ENCODE measurements at regions of chr17 and their contacts with region 1.

Region 1: DNA sequence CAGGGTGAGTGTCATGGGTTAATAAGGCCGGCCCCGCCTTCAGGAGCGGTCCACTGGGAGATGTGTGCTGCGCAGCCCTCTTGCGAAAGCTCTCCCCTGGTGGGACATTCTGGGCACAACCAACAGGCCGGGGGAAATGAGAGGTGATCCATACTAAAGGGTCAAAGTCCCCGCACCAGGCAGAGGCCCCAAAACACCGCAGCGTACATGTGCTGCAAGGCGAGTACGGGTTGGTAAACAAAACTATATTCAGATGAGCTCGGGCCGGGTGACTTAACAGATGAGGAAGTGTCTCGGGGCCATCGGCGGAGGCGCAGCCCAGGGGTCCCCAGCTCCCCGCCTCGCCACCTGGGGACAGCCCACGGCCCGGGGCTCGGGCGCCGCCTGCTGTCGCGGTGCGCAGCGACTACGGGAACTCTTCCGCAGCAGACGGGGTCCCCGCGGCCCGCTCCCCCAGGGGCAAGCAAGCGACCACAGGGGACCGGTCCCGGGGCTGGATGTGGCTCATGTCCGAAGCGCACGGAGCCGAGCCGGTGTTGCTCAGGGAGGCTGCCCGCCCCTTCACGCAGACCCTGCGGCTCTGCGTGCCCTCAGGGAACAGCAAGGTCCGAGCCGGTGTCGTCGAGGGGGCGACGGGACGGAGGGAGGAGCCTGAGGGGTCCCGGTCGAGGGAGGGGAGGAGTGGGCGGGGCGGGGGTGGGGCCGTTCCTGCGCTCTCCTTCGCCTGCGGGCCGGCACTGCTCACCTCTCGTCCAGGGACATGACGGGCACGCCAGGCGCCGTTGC is at the start of gene RAB37:
- DNase-seq: no peak
- ATAC-seq: peak; percentile 67
- H3K4me3 ChIP-seq: peak within 1 kb of the TSS; percentile 69
- H3K27ac ChIP-seq: peak within 1 kb of the TSS; percentile 47
- H3K4me1 ChIP-seq: peaks cover 32% of the 10 kb centered on the region
- H3K27me3 ChIP-seq: no peaks in the 10 kb centered on the region
- CTCF ChIP-seq: peak; percentile 64 to 76 (median 67); a peak in 5 of 6 replicates
- EP300 ChIP-seq: no peak
- POLR2A ChIP-seq: peak; percentile 31; the same call in 1 of the 2 replicates
- RAD21 ChIP-seq: peak; percentile 76
- polyA plus RNA-seq, gene RAB37: 0.48 to 0.97 TPM

Region 2: DNA sequence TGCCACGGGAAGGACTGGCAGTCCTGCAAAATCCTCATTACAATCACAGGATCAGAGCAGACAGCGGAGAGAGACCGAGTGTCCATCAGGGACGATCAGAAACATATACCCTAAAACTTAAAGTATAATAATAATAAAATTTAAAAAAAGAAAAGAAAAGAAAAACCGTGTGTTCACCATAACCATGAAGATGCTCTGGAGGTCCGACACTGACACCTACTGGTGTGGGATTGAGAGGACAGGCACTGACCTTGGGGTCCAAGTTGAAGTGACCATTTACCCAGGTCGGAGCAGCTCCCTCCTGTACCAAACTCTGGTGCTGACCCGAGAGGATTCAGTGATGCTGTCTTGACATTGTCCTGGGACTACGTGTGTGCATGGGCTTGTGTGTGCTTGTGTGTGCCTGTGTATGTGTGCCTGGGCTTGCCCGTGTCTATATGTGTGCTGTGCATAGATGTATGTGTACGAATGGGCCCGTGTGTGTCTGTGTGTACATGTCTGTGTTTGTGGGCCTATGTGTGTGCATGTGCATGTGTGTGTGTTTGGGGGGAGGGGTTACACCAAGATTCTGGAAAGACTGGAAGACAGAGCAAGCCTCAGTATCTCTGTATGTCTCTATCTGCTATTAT is 134.6 kb before region 1 on chr17:
- CTCF ChIA-PET with region 1: interaction called, 12 read pairs
- POLR2A ChIA-PET with region 1: no interaction called
- RAD21 ChIA-PET with region 1: interaction called, 6 read pairs
- SMC1A ChIA-PET with region 1: no interaction called
- in situ Hi-C with region 1: no loop called
- intact Hi-C with region 1: no loop called
- DNase-seq: no peak
- ATAC-seq: peak; percentile 85
- H3K4me3 ChIP-seq: no peak overlapping the region
- H3K27ac ChIP-seq: no peak overlapping the region
- H3K4me1 ChIP-seq: no peaks in the 10 kb centered on the region; the same call in 1 of the 2 replicates
- H3K27me3 ChIP-seq: peaks cover 2 to 4% of the 10 kb centered on the region in 2 experiments; a peak in 3 of 4 replicates
- CTCF ChIP-seq: peak; percentile 67 to 71 (median 70)
- EP300 ChIP-seq: no peak
- POLR2A ChIP-seq: no peak
- RAD21 ChIP-seq: peak; percentile 73

Region 3: DNA sequence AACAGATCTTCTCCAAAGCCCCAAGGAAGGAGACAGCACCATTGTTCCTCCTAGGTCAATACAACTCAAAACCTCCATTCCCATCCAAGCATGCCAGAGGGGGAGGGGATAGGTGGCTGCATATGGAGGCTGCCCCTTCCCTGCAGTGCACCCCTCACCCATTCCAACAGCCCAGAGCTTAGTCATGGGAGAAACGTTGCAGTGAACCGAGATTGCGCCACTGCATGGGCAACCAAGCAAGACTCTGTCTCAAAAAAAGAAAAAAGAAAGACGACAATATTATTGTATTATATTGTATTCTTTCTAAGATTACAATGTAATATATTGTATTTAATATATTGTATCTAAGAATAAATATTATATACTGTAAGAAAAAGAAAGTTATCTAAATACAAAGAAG is 76.8 kb before region 1 on chr17:
- CTCF ChIA-PET with region 1: interaction called, 349 read pairs
- POLR2A ChIA-PET with region 1: interaction called, 37 read pairs
- RAD21 ChIA-PET with region 1: interaction called, 299 read pairs
- SMC1A ChIA-PET with region 1: interaction called, 152 read pairs
- in situ Hi-C with region 1: loop called (anchors 5 kb)
- intact Hi-C with region 1: loop called (anchors 1 kb)
- DNase-seq: no peak
- ATAC-seq: no peak
- H3K4me3 ChIP-seq: no peak overlapping the region
- H3K27ac ChIP-seq: no peak overlapping the region
- H3K4me1 ChIP-seq: 0 out of 2 replicates have a peak, but pooled peaks cover 2% of the 10 kb centered on the region
- H3K27me3 ChIP-seq: peaks cover 0 to 3% of the 10 kb centered on the region in 2 experiments; a peak in 2 of 4 replicates
- CTCF ChIP-seq: no peak
- EP300 ChIP-seq: no peak
- POLR2A ChIP-seq: no peak
- RAD21 ChIP-seq: no peak

Region 4: DNA sequence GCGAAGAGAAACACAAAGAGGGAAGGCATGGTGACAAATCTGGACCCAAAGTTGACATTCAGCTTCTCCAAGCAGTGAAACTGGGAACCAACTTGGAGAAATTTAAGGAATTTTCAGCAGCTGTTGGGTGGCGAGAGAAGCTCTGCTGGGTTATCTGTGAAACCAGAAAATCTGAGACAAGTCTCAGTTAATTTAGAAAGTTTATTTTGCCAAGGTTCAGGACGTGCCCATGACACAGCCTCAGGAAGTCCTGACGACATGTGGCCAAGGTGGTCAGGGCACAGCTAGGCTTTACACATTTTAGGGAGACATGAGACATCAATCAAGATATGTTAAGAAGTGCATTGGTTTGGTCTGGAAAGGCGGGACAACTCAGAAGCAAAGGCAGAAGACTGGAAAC is 12.8 kb before region 1 on chr17:
- CTCF ChIA-PET with region 1: interaction called, 20 read pairs
- POLR2A ChIA-PET with region 1: no interaction called
- RAD21 ChIA-PET with region 1: interaction called, 6 read pairs
- SMC1A ChIA-PET with region 1: interaction called, 4 read pairs
- in situ Hi-C with region 1: no loop called
- intact Hi-C with region 1: no loop called
- DNase-seq: no peak
- ATAC-seq: no peak
- H3K4me3 ChIP-seq: no peak overlapping the region
- H3K27ac ChIP-seq: no peak overlapping the region
- H3K4me1 ChIP-seq: no peaks in the 10 kb centered on the region
- H3K27me3 ChIP-seq: 0 out of 4 replicates have a peak, but pooled peaks cover 0 to 2% of the 10 kb centered on the region in 2 experiments
- CTCF ChIP-seq: no peak
- EP300 ChIP-seq: no peak
- POLR2A ChIP-seq: no peak
- RAD21 ChIP-seq: no peak

Region 5: DNA sequence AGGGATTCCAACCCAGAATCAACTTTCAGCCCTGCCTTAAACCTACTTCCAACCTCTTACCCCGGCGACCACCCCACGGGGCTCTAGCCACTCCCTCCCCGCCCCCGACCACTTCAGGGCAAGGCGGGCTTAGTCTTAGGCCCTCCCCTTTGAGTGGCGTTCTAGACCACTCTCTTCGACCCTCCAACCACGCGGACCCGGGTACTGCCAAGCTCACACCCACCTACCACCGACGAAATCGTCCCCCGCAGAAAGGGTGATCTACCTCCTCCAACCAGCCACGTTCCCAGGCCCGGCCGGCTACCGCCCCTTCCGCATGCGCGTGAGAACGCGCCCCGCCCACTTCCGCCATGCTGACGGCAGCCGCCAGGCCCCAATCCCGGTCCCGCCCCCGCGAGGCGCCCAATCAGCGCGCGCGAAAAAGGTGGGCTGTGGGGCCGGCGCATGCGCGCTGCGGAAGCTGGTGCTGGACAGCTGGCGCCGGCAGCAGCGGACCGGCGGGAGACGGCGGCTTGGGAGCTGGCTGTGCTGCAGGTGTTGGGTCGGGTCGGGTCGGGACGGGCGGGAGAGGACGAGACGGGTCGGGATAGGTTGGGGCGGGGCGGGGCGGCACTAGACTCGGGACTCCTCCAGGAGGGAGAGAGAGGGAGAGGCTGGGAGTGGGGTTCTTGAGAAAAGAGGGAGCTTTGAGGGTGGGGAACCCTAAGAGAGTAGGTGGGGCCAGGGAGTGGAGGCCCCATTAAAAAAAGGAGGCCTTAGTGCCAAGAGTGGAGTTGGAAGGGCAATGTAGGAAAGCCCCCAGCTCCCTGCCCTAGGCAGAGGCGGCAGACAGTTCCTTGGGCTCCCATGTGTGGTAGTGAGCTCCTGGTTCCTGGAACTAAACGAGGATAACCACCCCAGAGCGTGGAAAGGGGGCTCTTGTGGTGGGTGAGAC is 39.6 kb after region 1 on chr17 and contains the start of gene NAT9:
- CTCF ChIA-PET with region 1: interaction called, 18 read pairs
- POLR2A ChIA-PET with region 1: interaction called, 7 read pairs
- RAD21 ChIA-PET with region 1: interaction called, 11 read pairs
- SMC1A ChIA-PET with region 1: interaction called, 10 read pairs
- in situ Hi-C with region 1: no loop called
- intact Hi-C with region 1: no loop called
- DNase-seq: peak; percentile 82
- ATAC-seq: peak; percentile 91
- H3K4me3 ChIP-seq: peak within 1 kb of the TSS; percentile 73
- H3K27ac ChIP-seq: peak within 1 kb of the TSS; percentile 59
- H3K4me1 ChIP-seq: peaks cover 28% of the 10 kb centered on the region
- H3K27me3 ChIP-seq: no peaks in the 10 kb centered on the region
- CTCF ChIP-seq: no peak
- EP300 ChIP-seq: no peak
- POLR2A ChIP-seq: peak; percentile 89
- RAD21 ChIP-seq: no peak
- polyA plus RNA-seq, gene NAT9: 3.5 to 4.5 TPM

Region 6: GRCh38 chr17:74919440-74920305 is 183.0 kb after region 1 on chr17:
- CTCF ChIA-PET with region 1: no interaction called
- POLR2A ChIA-PET with region 1: no interaction called
- RAD21 ChIA-PET with region 1: no interaction called
- SMC1A ChIA-PET with region 1: no interaction called
- in situ Hi-C with region 1: no loop called
- intact Hi-C with region 1: no loop called
- DNase-seq: no peak
- ATAC-seq: 0 out of 3 replicates have a peak, but pooled peaks have one; percentile 19
- H3K4me3 ChIP-seq: no peak overlapping the region
- H3K27ac ChIP-seq: no peak overlapping the region
- H3K4me1 ChIP-seq: no peaks in the 10 kb centered on the region
- H3K27me3 ChIP-seq: peaks cover 10 to 13% of the 10 kb centered on the region in 2 experiments
- CTCF ChIP-seq: peak; percentile 31 to 42 (median 42); a peak in 4 of 6 replicates
- EP300 ChIP-seq: no peak
- POLR2A ChIP-seq: no peak
- RAD21 ChIP-seq: peak; percentile 67